Activated naive CD4-positive, alpha-beta T cell treated with anti-CD3 and anti-CD28 coated beads for 36 hours (primary cell): ENCODE measurements at regions of chr6 and their contacts with region 1.

Region 1: GRCh38 chr6:28940858-28941680 is 17.3 kb upstream of the TRIM27 start:
- DNase-seq: peak; percentile 87
- H3K4me3 Mint-ChIP-seq: peak overlapping the region; percentile 93
- H3K27ac Mint-ChIP-seq: peak overlapping the region; percentile 99
- H3K4me1 Mint-ChIP-seq: peaks cover 40% of the 10 kb centered on the region
- H3K27me3 Mint-ChIP-seq: no peaks in the 10 kb centered on the region

Region 2: GRCh38 chr6:28542440-28543296 is 398.4 kb before region 1 on chr6:
- CTCF ChIA-PET with region 1: no interaction called
- intact Hi-C with region 1: loop called (anchors 5 kb)
- DNase-seq: peak; percentile 80
- H3K4me3 Mint-ChIP-seq: peak overlapping the region; percentile 91
- H3K27ac Mint-ChIP-seq: peak overlapping the region; percentile 80
- H3K4me1 Mint-ChIP-seq: peaks cover 27% of the 10 kb centered on the region
- H3K27me3 Mint-ChIP-seq: peaks cover 30% of the 10 kb centered on the region

Region 3: DNA sequence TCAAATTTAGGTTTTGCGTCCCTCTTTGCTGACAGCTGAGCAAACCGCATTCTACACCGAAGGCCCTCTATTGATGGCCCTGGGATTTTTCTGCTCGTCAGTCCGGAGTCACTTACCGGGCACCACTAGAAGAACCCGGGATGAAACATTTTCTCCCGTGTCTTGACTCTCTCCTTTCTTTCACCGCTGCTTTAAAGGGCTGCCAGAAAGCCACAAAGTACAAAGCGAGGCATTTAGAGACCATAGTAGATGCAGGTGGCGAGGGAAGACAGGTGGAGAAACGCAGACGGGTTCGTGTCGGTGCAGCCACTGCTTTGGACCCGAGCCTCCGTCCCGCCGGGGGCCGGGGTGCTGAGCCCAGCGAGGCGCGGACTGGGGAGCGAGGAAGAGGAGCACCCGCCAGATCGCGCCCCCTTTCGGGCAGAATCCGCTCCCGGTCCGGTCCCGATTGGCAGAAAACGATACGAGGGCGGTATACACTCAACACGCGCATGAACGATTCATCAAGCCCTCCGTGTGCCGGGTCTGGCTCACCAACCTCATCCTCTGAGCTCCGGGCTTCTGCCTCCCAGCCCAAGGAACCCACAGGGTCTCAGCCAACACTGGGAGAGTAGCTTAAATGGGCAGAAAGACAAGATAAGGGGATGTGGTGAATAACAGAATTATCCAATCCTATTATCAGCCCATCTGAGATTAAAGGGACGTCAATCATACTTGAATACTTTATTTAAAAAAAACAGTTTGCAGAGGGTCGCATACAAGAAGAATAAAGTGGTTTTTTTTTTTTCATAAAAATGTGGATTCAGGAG is 102.2 kb before region 1 on chr6:
- CTCF ChIA-PET with region 1: interaction called, 11 read pairs
- intact Hi-C with region 1: loop called (anchors 1 kb)
- DNase-seq: peak; percentile 91
- H3K4me3 Mint-ChIP-seq: peak overlapping the region; percentile 95
- H3K27ac Mint-ChIP-seq: peak overlapping the region; percentile 86
- H3K4me1 Mint-ChIP-seq: peaks cover 9% of the 10 kb centered on the region
- H3K27me3 Mint-ChIP-seq: peaks cover 21% of the 10 kb centered on the region

Region 4: GRCh38 chr6:28895134-28895812 is 45.8 kb before region 1 on chr6:
- CTCF ChIA-PET with region 1: no interaction called
- intact Hi-C with region 1: loop called (anchors 1 kb)
- DNase-seq: peak; percentile 98
- H3K4me3 Mint-ChIP-seq: peak overlapping the region; percentile 96
- H3K27ac Mint-ChIP-seq: peak overlapping the region; percentile 100
- H3K4me1 Mint-ChIP-seq: peaks cover 6% of the 10 kb centered on the region
- H3K27me3 Mint-ChIP-seq: peaks cover 3% of the 10 kb centered on the region

Region 5: GRCh38 chr6:28981833-28982475 is 40.9 kb after region 1 on chr6:
- CTCF ChIA-PET with region 1: interaction called, 4 read pairs
- intact Hi-C with region 1: loop called (anchors 1 kb)
- DNase-seq: peak; percentile 78
- H3K4me3 Mint-ChIP-seq: peak overlapping the region; percentile 88
- H3K27ac Mint-ChIP-seq: peak overlapping the region; percentile 84
- H3K4me1 Mint-ChIP-seq: peaks cover 50% of the 10 kb centered on the region
- H3K27me3 Mint-ChIP-seq: peaks cover 29% of the 10 kb centered on the region